ENCODE measurements at regions of chr3 and their contacts with region 1.

Region 1: DNA sequence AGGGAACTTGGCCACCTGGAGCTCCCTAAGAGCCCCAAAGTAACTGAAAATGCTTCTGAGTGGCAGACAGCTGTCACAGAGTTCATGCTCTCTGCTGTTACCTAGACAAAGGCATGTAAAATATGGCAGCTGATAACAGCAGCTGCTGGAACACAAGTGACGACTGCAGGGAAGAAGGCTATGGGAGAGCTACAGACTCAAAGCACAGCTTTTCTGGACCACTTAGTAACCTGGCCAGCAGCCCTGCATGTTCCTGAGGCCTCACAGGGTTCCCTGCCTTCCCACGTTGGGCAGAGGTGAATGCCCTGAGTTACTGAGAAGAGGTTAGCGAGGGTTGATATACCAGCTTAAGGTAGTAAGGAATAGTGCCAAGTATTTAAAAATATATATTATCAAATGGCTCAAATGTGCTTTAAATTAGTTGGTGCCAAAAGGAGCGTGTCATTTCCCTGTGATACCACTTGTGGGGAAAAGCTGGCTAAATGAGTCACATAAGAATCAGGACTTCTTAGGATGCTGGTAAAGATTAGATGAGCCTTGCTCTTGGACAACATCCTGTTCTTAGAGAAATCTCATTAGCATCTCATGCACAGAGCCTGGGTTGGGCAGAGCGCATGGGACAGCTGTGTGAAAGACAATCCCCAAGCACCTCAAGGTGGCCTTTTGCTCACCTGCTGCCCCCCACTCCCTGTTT is 76.4 kb upstream of the SCN5A start:
- DNase-seq: peak; percentile 84
- H3K4me3 ChIP-seq: no peak overlapping the region
- H3K27ac ChIP-seq: peak overlapping the region; percentile 95
- H3K4me1 ChIP-seq: peaks cover 78% of the 10 kb centered on the region
- H3K27me3 ChIP-seq: no peaks in the 10 kb centered on the region
- CTCF ChIP-seq: no peak
- POLR2A ChIP-seq: no peak

Region 2: GRCh38 chr3:38738630-38739395 is 12.9 kb after region 1 on chr3:
- CTCF ChIA-PET with region 1: interaction called, 50 read pairs
- POLR2A ChIA-PET with region 1: interaction called, 3 read pairs
- dilution Hi-C with region 1: no loop called
- intact Hi-C with region 1: no loop called
- DNase-seq: peak; percentile 73
- H3K4me3 ChIP-seq: no peak overlapping the region
- H3K27ac ChIP-seq: peak overlapping the region; percentile 10
- H3K4me1 ChIP-seq: peaks cover 3% of the 10 kb centered on the region
- H3K27me3 ChIP-seq: no peaks in the 10 kb centered on the region
- CTCF ChIP-seq: peak; percentile 84 to 89
- POLR2A ChIP-seq: no peak

Region 3: DNA sequence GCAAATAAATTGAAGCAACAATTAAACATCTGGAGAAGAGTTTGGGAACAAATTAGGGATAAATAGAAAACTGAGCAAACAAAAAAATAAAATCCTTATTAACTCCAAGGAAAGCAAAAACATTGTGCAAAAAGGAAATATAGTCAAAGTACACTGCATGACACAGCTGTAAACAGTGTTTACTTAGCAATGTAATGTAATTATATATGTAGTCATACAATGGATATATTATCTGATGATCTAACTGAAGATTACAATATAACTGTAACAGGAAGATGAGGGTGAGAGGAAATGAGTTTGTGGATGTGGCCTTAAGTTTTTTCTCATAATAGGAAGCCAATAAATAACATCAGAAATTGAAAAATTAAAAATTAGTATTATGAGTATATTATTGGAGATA is 47.7 kb after region 1 on chr3:
- CTCF ChIA-PET with region 1: no interaction called
- POLR2A ChIA-PET with region 1: no interaction called
- dilution Hi-C with region 1: no loop called
- intact Hi-C with region 1: loop called (anchors 2 kb)
- DNase-seq: peak; percentile 53
- H3K4me3 ChIP-seq: no peak overlapping the region
- H3K27ac ChIP-seq: peak overlapping the region; percentile 60
- H3K4me1 ChIP-seq: peaks cover 17% of the 10 kb centered on the region
- H3K27me3 ChIP-seq: no peaks in the 10 kb centered on the region
- CTCF ChIP-seq: no peak
- POLR2A ChIP-seq: no peak

Region 4: GRCh38 chr3:38834110-38834509 is 108.2 kb after region 1 on chr3:
- CTCF ChIA-PET with region 1: interaction called, 5 read pairs
- POLR2A ChIA-PET with region 1: no interaction called
- dilution Hi-C with region 1: no loop called
- intact Hi-C with region 1: loop called (anchors 1 kb)
- DNase-seq: peak; percentile 95
- H3K4me3 ChIP-seq: no peak overlapping the region
- H3K27ac ChIP-seq: peak overlapping the region; percentile 86
- H3K4me1 ChIP-seq: peaks cover 44% of the 10 kb centered on the region
- H3K27me3 ChIP-seq: no peaks in the 10 kb centered on the region
- CTCF ChIP-seq: no peak
- POLR2A ChIP-seq: peak; percentile 33

Region 5: GRCh38 chr3:39146984-39147591 is 421.2 kb after region 1 on chr3:
- CTCF ChIA-PET with region 1: no interaction called
- POLR2A ChIA-PET with region 1: no interaction called
- dilution Hi-C with region 1: no loop called
- intact Hi-C with region 1: loop called (anchors 10 kb)
- DNase-seq: peak; percentile 95
- H3K4me3 ChIP-seq: peak overlapping the region in 1 of 3 experiments; percentile 33
- H3K27ac ChIP-seq: peak overlapping the region; percentile 97
- H3K4me1 ChIP-seq: peaks cover 65% of the 10 kb centered on the region
- H3K27me3 ChIP-seq: no peaks in the 10 kb centered on the region
- CTCF ChIP-seq: no peak
- POLR2A ChIP-seq: peak; percentile 40